Activated CD4-positive, alpha-beta T cell treated with anti-CD3 and anti-CD28 coated beads, Interleukin-2, amount 10 ng/mL, durations not matched to agents 24 days and 14 days (primary cell): ENCODE measurements at regions of chr11 and their contacts with region 1.

Region 1: GRCh38 chr11:25981998-25982397 is 349.9 kb upstream of the ANO3 start:
- DNase-seq: no peak
- H3K4me3 Mint-ChIP-seq: no peak overlapping the region
- H3K27ac Mint-ChIP-seq: no peak overlapping the region
- H3K4me1 Mint-ChIP-seq: no peaks in the 10 kb centered on the region
- H3K27me3 Mint-ChIP-seq: no peaks in the 10 kb centered on the region

Region 2: GRCh38 chr11:26028294-26028954 is 46.4 kb after region 1 on chr11:
- intact Hi-C with region 1: no loop called
- DNase-seq: no peak
- H3K4me3 Mint-ChIP-seq: no peak overlapping the region
- H3K27ac Mint-ChIP-seq: no peak overlapping the region
- H3K4me1 Mint-ChIP-seq: no peaks in the 10 kb centered on the region
- H3K27me3 Mint-ChIP-seq: no peaks in the 10 kb centered on the region

Region 3: GRCh38 chr11:26234456-26234855 is 252.5 kb after region 1 on chr11:
- intact Hi-C with region 1: no loop called
- DNase-seq: no peak
- H3K4me3 Mint-ChIP-seq: no peak overlapping the region
- H3K27ac Mint-ChIP-seq: no peak overlapping the region
- H3K4me1 Mint-ChIP-seq: no peaks in the 10 kb centered on the region
- H3K27me3 Mint-ChIP-seq: no peaks in the 10 kb centered on the region

Region 4: GRCh38 chr11:26276798-26277424 is 294.9 kb after region 1 on chr11:
- intact Hi-C with region 1: loop called (anchors 2 kb)
- DNase-seq: peak; percentile 82
- H3K4me3 Mint-ChIP-seq: no peak overlapping the region
- H3K27ac Mint-ChIP-seq: no peak overlapping the region
- H3K4me1 Mint-ChIP-seq: no peaks in the 10 kb centered on the region
- H3K27me3 Mint-ChIP-seq: no peaks in the 10 kb centered on the region